ENCODE measurements at regions of chr1 and their contacts with region 1.

Region 1: GRCh38 chr1:25494952-25495351 is 48.5 kb upstream of the LDLRAP1 start:
- DNase-seq: no peak
- H3K4me3 ChIP-seq: no peak overlapping the region
- H3K27ac ChIP-seq: peak overlapping the region in 1 of 2 donors; percentile 3
- H3K4me1 ChIP-seq: no peaks in the 10 kb centered on the region
- H3K27me3 ChIP-seq: no peaks in the 10 kb centered on the region
- CTCF ChIP-seq: no peak
- POLR2A ChIP-seq: no peak

Region 2: GRCh38 chr1:25559031-25559430 is 64.1 kb after region 1 on chr1:
- intact Hi-C with region 1: loop called (anchors 2 kb)
- DNase-seq: no peak
- H3K4me3 ChIP-seq: no peak overlapping the region
- H3K27ac ChIP-seq: peak overlapping the region; percentile 22 to 69
- H3K4me1 ChIP-seq: peaks cover 0 to 12% of the 10 kb centered on the region in 2 donors
- H3K27me3 ChIP-seq: no peaks in the 10 kb centered on the region
- CTCF ChIP-seq: no peak
- POLR2A ChIP-seq: no peak